Spleen (tissue), 13 donors: ENCODE measurements at regions of chr6 and their contacts with region 1.

Region 1: GRCh38 chr6:159862103-159862502 is 28.7 kb upstream of the MAS1 start:
- DNase-seq: no peak
- H3K4me3 ChIP-seq: no peak overlapping the region
- H3K27ac ChIP-seq: no peak overlapping the region
- H3K4me1 ChIP-seq: peaks cover 0 to 14% (median 0%) of the 10 kb centered on the region in 6 donors
- H3K27me3 ChIP-seq: peaks cover 0 to 5% (median 0%) of the 10 kb centered on the region in 7 donors
- CTCF ChIP-seq: no peak
- POLR2A ChIP-seq: no peak

Region 2: DNA sequence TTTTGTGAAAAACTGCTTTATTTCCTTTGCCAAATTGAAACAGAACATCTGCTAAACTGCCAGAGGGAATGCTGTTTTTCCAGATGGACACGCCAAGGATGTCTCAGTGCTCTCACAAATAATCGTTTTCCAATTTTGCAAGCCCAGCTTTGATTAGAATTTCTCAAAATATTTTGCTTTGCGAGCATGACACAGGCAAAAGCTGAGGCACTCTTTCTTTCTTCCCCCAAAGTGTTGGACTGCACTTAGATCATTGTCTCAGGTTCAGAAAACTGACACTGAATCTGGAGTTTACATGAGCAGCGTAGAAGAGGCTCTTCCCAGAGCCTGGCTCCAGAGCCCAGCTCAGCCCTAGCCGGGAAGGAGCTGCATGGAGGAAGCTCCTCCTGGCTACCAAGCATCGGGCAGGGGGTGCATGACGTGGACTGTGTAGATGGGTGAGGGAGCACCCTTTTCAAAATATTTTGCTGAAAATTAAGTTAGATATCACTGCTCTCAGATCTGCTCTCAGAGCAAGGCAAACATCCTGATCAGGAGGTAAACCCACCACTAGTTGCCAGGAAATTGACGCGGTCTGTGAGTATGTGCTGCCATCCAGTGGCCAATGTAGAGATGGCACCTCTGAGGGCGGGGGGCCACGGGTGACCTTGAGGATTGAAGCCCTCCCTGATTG is 593.6 kb after region 1 on chr6:
- intact Hi-C with region 1: loop called (anchors 10 kb)
- DNase-seq: peak; percentile 87
- H3K4me3 ChIP-seq: peak overlapping the region in 1 of 8 donors; percentile 31
- H3K27ac ChIP-seq: no peak overlapping the region
- H3K4me1 ChIP-seq: peaks cover 0 to 45% (median 21%) of the 10 kb centered on the region in 6 donors
- H3K27me3 ChIP-seq: peaks cover 0 to 3% (median 0%) of the 10 kb centered on the region in 7 donors
- CTCF ChIP-seq: peak; percentile 92 to 96 (median 94)
- POLR2A ChIP-seq: no peak